ENCODE measurements at regions of chr5 and their contacts with region 1.

Region 1: GRCh38 chr5:44814761-44815160 is 6.0 kb downstream of the MRPS30 start:
- DNase-seq: no peak
- ATAC-seq: no peak
- H3K4me3 Mint-ChIP-seq: no peak overlapping the region
- H3K27ac Mint-ChIP-seq: no peak overlapping the region
- H3K4me1 Mint-ChIP-seq: peaks cover 27% of the 10 kb centered on the region
- H3K27me3 Mint-ChIP-seq: no peaks in the 10 kb centered on the region

Region 2: GRCh38 chr5:44797841-44798240 is 16.9 kb before region 1 on chr5:
- CTCF ChIA-PET with region 1: no interaction called
- POLR2A ChIA-PET with region 1: no interaction called
- intact Hi-C with region 1: no loop called
- DNase-seq: no peak
- ATAC-seq: no peak
- H3K4me3 Mint-ChIP-seq: no peak overlapping the region
- H3K27ac Mint-ChIP-seq: no peak overlapping the region
- H3K4me1 Mint-ChIP-seq: no peaks in the 10 kb centered on the region
- H3K27me3 Mint-ChIP-seq: peaks cover 4% of the 10 kb centered on the region

Region 3: DNA sequence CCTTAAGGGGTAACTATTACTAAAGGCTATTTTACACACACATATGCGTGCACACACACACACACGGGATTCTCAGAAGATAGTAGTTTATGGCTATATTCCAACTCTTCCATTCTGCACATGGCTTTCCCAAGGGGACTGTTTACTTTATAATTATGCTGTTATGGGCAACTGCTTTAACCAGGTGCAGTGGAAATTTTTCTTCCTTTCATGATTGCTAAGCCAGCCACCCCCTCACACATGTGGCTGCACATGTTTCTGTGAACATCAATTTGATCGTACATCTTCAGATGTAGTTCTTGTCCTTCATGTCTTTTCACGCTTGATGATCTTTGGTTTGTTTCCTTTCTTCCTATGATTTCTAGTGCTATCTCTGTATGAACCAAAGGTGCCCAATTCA is 31.0 kb after region 1 on chr5:
- CTCF ChIA-PET with region 1: no interaction called
- POLR2A ChIA-PET with region 1: no interaction called
- intact Hi-C with region 1: loop called in 1 of 2 experiments (anchors 1 kb)
- DNase-seq: no peak
- ATAC-seq: no peak
- H3K4me3 Mint-ChIP-seq: no peak overlapping the region
- H3K27ac Mint-ChIP-seq: no peak overlapping the region
- H3K4me1 Mint-ChIP-seq: no peaks in the 10 kb centered on the region
- H3K27me3 Mint-ChIP-seq: no peaks in the 10 kb centered on the region

Region 4: GRCh38 chr5:45110399-45110798 is 295.6 kb after region 1 on chr5:
- CTCF ChIA-PET with region 1: no interaction called
- POLR2A ChIA-PET with region 1: no interaction called
- intact Hi-C with region 1: no loop called
- DNase-seq: no peak
- ATAC-seq: no peak
- H3K4me3 Mint-ChIP-seq: no peak overlapping the region
- H3K27ac Mint-ChIP-seq: no peak overlapping the region
- H3K4me1 Mint-ChIP-seq: no peaks in the 10 kb centered on the region
- H3K27me3 Mint-ChIP-seq: no peaks in the 10 kb centered on the region